GM12878 (cell line): ENCODE measurements at regions of chr11 and their contacts with region 1.

Region 1: GRCh38 chr11:65512306-65512705 is 12.6 kb upstream of the SCYL1 start:
- DNase-seq: no peak
- ATAC-seq: no peak
- H3K4me3 ChIP-seq: no peak overlapping the region
- H3K27ac ChIP-seq: no peak overlapping the region
- H3K4me1 ChIP-seq: 0 out of 2 replicates have a peak, but pooled peaks cover 3% of the 10 kb centered on the region
- H3K27me3 ChIP-seq: no peaks in the 10 kb centered on the region; a peak in 1 of 4 replicates
- CTCF ChIP-seq: no peak
- EP300 ChIP-seq: no peak
- POLR2A ChIP-seq: no peak
- RAD21 ChIP-seq: no peak

Region 2: DNA sequence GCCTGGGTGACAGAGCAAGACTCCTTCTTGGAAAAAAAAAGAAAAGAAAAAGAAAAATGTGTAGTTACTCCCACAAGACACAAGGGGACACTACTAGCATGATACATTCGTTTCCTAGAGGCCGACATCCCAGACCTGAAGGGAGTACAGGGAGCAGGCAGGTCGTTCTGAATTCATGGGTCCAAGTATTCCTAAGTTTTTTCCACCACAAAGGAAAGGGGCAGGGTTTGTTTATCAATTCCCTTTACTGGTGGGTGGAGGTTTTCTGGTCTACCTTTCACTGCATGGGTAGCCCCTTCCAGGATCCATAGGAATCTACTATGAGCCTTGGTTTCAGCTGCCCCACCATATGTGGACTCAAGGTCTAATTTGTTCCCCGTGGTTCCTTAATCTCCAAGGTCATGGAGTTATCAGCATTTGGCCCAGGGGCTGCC is 145.9 kb before region 1 on chr11:
- CTCF ChIA-PET with region 1: interaction called, 29 read pairs
- POLR2A ChIA-PET with region 1: interaction called, 6 read pairs
- RAD21 ChIA-PET with region 1: interaction called, 8 read pairs
- SMC1A ChIA-PET with region 1: interaction called, 18 read pairs
- in situ Hi-C with region 1: loop called (anchors 5 kb)
- intact Hi-C with region 1: loop called (anchors 1 kb)
- DNase-seq: no peak
- ATAC-seq: peak; percentile 42
- H3K4me3 ChIP-seq: no peak overlapping the region
- H3K27ac ChIP-seq: no peak overlapping the region
- H3K4me1 ChIP-seq: peaks cover 16% of the 10 kb centered on the region
- H3K27me3 ChIP-seq: no peaks in the 10 kb centered on the region; a peak in 1 of 4 replicates
- CTCF ChIP-seq: peak; percentile 74 to 79 (median 76)
- EP300 ChIP-seq: no peak
- POLR2A ChIP-seq: no peak
- RAD21 ChIP-seq: peak; percentile 94